Naive thymus-derived CD8-positive, alpha-beta T cell (primary cell): ENCODE measurements at regions of chr6 and their contacts with region 1.

Region 1: GRCh38 chr6:35787266-35788218 is 6.7 kb downstream of the CLPSL1 start:
- DNase-seq: no peak
- ATAC-seq: no peak
- H3K4me3 Mint-ChIP-seq: no peak overlapping the region
- H3K27ac Mint-ChIP-seq: no peak overlapping the region
- H3K4me1 Mint-ChIP-seq: peaks cover 0 to 4% (median under 1%) of the 10 kb centered on the region in 4 donors
- H3K27me3 Mint-ChIP-seq: peaks cover 24 to 59% (median 54%) of the 10 kb centered on the region in 5 donors

Region 2: GRCh38 chr6:35737413-35738211 is 49.9 kb before region 1 on chr6:
- POLR2A ChIA-PET with region 1: interaction called, 10 read pairs
- DNase-seq: peak in 4 of 10 donors; percentile 43 to 76 (median 74)
- ATAC-seq: peak; percentile 67 to 72
- H3K4me3 Mint-ChIP-seq: peak overlapping the region in 7 of 10 donors; percentile 12 to 89 (median 74)
- H3K27ac Mint-ChIP-seq: peak overlapping the region; percentile 68 to 93 (median 88)
- H3K4me1 Mint-ChIP-seq: peaks cover 23 to 52% (median 43%) of the 10 kb centered on the region in 4 donors
- H3K27me3 Mint-ChIP-seq: no peaks in the 10 kb centered on the region